ENCODE measurements at regions of chr9 and their contacts with region 1.

Region 1: DNA sequence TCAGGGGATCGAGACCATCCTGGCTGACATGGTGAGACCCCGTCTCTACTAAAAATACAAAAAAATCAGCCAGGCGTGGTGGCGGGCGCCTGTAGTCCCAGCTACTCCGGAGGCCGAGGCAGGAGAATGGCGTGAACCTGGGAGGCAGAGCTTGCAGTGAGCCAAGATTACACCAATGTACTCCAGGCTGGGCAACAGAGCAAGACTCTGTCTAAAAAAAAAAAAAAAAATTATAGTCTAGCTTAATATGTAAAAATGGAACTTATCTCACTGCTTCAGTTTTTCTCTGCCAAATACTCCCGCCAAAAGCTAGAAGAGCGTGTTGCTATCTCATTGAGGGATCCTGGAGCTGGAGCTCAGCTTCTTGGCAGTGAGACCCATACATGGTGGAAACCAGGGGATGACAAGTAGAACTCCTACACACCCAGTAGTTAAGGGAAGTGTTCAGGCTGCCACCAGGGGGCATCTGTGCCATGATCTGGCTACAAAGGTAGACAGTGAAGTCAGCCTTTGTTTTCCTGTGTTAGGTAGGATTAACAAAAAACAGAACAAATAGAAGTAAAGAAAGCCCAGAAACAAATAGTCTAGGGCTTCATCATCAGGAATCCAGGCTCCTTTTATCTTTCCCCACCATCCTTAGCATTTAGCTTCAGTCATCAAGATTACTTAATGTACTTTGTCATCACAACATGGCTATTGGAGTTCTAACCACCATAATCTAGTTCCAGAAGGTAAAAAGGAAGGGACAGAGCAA is 33.6 kb upstream of the GLIPR2 start:
- DNase-seq: peak; percentile 75
- H3K4me3 Mint-ChIP-seq: no peak overlapping the region
- H3K27ac Mint-ChIP-seq: no peak overlapping the region
- H3K4me1 Mint-ChIP-seq: peaks cover 7% of the 10 kb centered on the region
- H3K27me3 Mint-ChIP-seq: no peaks in the 10 kb centered on the region

Region 2: DNA sequence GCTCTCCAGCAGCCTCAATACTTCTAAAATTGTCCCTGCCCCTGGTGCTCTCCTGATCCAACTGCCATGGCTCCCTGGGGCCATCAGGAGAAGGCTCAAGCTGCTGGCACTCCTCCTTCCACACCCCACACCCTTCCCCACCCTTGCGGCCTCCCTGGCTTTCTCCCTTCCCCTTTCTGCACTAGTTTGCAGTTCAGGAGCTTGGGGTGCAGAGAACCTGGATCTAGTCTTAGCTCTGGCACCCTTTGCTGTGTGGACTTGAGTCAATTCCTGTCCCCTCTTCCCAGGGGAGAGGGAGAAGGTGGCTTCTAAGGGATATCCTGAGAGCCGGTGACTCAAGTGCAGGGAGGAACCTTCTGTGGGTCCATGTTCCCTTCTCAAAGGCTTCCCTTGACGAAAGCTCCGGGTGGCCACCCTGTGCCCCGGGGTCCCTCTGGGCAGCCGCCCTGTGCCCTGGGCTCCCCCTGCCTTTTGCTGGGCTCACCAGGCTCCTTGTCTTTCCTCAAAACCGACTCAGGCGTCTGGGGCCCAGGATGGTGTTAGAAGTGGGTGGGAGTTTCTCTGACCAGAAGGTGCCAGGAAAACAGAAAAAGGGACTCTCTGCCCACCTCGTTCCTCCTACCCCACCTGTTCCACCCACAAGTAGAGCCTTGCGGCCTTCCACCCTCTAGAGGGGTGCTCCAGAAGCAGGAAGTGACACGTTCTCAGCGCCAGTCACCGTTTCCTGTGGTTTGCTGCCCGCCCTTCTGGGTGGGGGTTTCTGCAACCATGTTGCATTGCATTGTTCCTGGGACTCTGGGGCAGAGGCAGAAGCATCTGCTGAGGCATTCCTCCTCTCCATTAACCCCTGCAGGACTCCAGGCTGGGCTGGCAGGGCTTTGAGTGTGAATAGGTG is 48.6 kb after region 1 on chr9:
- intact Hi-C with region 1: loop called (anchors 5 kb)
- DNase-seq: peak; percentile 83
- H3K4me3 Mint-ChIP-seq: peak overlapping the region; percentile 71
- H3K27ac Mint-ChIP-seq: peak overlapping the region; percentile 90
- H3K4me1 Mint-ChIP-seq: peaks cover 59% of the 10 kb centered on the region
- H3K27me3 Mint-ChIP-seq: no peaks in the 10 kb centered on the region

Region 3: GRCh38 chr9:36166101-36166927 is 63.4 kb after region 1 on chr9:
- intact Hi-C with region 1: loop called (anchors 1 kb)
- DNase-seq: peak; percentile 81
- H3K4me3 Mint-ChIP-seq: peak overlapping the region; percentile 72
- H3K27ac Mint-ChIP-seq: no peak overlapping the region
- H3K4me1 Mint-ChIP-seq: peaks cover 5% of the 10 kb centered on the region
- H3K27me3 Mint-ChIP-seq: peaks cover 7% of the 10 kb centered on the region

Region 4: DNA sequence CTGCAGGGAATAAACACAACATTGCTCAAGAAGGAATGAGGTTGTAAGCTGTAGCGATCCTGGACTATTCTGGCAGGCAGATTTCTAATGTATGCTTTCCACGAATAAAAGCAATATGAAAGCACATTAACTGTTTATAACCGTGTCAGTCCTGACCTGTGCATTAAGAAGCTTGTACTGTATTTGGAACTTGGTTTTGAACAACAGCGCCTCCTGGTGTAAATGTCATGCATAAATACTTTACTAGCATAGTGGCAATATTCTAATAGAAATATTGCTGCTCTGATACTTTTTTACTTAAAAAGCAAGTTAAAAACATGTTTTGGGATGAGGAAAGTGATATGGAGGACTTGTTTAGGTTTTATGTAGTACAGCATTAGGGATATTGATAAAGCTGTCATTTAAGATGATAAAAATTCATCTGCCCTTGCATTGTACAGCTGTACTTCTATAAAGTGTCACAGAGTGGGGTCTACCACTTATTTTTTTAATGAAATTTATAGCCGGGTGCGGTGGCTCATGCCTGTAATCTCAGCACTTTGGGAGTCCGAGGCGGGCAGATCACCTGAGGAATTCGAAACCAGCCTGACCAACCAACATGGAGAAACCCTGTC is 226.0 kb after region 1 on chr9:
- intact Hi-C with region 1: loop called (anchors 5 kb)
- DNase-seq: peak; percentile 23
- H3K4me3 Mint-ChIP-seq: no peak overlapping the region
- H3K27ac Mint-ChIP-seq: no peak overlapping the region
- H3K4me1 Mint-ChIP-seq: peaks cover 4% of the 10 kb centered on the region
- H3K27me3 Mint-ChIP-seq: no peaks in the 10 kb centered on the region